ENCODE measurements at regions of chr15 and their contacts with region 1.

Region 1: GRCh38 chr15:63236272-63236671 is 41.1 kb upstream of the APH1B start:
- DNase-seq: peak; percentile 85
- ATAC-seq: peak; percentile 60
- H3K4me3 ChIP-seq: peak overlapping the region; percentile 8; the same call in 1 of the 2 replicates
- H3K27ac ChIP-seq: peak overlapping the region; percentile 77
- H3K4me1 ChIP-seq: peaks cover 61% of the 10 kb centered on the region
- H3K27me3 ChIP-seq: no peaks in the 10 kb centered on the region
- CTCF ChIP-seq: no peak

Region 2: GRCh38 chr15:62719316-62719715 is 517.0 kb before region 1 on chr15:
- CTCF ChIA-PET with region 1: no interaction called
- POLR2A ChIA-PET with region 1: no interaction called
- intact Hi-C with region 1: no loop called
- DNase-seq: no peak
- ATAC-seq: no peak
- H3K4me3 ChIP-seq: no peak overlapping the region
- H3K27ac ChIP-seq: no peak overlapping the region
- H3K4me1 ChIP-seq: no peaks in the 10 kb centered on the region
- H3K27me3 ChIP-seq: no peaks in the 10 kb centered on the region
- CTCF ChIP-seq: no peak

Region 3: GRCh38 chr15:63166219-63166618 is 70.1 kb before region 1 on chr15:
- CTCF ChIA-PET with region 1: interaction called, 3 read pairs
- POLR2A ChIA-PET with region 1: interaction called, 24 read pairs
- intact Hi-C with region 1: no loop called
- DNase-seq: peak; percentile 34
- ATAC-seq: peak; percentile 65
- H3K4me3 ChIP-seq: no peak overlapping the region
- H3K27ac ChIP-seq: no peak overlapping the region
- H3K4me1 ChIP-seq: no peaks in the 10 kb centered on the region
- H3K27me3 ChIP-seq: no peaks in the 10 kb centered on the region
- CTCF ChIP-seq: peak; percentile 52

Region 4: GRCh38 chr15:63198371-63199250 is 37.7 kb before region 1 on chr15:
- CTCF ChIA-PET with region 1: no interaction called
- POLR2A ChIA-PET with region 1: interaction called, 3 read pairs
- intact Hi-C with region 1: loop called (anchors 2 kb)
- DNase-seq: peak; percentile 72
- ATAC-seq: peak; percentile 74
- H3K4me3 ChIP-seq: peak overlapping the region; percentile 2; the same call in 1 of the 2 replicates
- H3K27ac ChIP-seq: peak overlapping the region; percentile 62
- H3K4me1 ChIP-seq: peaks cover 58% of the 10 kb centered on the region
- H3K27me3 ChIP-seq: no peaks in the 10 kb centered on the region
- CTCF ChIP-seq: no peak

Measured in PC-3 (cell line).